MCF 10A (cell line): ENCODE measurements at regions of chr17 and their contacts with region 1.

Region 1: DNA sequence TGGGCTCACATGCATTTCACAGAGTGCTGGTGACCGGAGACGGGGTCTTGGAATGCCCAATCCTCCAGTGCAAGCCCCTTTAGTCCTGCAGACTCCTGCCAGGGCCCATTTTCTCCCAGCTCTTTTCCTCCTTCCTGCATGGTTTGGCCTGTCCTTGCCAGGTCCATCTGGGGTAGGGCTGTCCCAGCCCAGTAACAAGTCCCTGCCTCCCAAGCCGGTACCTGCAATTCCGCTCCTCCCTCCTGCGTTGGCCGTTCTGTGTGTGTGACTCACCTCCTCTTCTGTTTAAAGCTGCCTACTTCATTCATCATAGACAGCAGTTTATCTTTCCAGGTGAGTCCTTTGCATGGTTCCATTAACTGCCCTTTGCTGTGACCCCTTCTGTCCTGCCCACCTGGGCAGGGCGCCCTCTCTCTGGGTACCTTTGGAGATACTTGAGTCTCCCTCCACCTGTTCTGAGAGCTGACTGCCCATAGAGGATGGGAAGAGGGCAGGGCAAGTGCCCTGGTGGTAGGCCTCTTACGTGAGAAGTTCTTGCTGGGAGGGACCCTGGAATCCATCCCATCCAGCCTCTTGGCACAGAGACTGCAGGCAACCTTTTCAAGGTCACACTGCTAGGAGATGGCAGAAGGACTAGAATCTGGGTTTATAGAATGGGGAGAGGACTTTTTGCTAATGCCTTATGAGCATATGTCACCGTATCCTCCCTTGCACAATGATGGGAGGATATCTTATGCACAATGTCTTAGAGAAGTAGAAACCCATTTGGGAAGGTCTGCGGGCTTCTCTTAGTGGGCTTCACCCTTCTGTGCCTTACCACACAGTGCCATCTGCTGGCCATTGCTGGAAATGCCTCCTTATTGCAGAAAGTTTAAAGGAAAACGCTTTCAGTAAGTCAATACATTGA is 29.7 kb upstream of the LGALS9 start:
- DNase-seq: peak; percentile 79
- H3K4me3 Mint-ChIP-seq: no peak overlapping the region
- H3K27ac Mint-ChIP-seq: no peak overlapping the region
- H3K4me1 Mint-ChIP-seq: peaks cover 21% of the 10 kb centered on the region
- H3K27me3 Mint-ChIP-seq: no peaks in the 10 kb centered on the region
- CTCF ChIP-seq: peak; percentile 93

Region 2: DNA sequence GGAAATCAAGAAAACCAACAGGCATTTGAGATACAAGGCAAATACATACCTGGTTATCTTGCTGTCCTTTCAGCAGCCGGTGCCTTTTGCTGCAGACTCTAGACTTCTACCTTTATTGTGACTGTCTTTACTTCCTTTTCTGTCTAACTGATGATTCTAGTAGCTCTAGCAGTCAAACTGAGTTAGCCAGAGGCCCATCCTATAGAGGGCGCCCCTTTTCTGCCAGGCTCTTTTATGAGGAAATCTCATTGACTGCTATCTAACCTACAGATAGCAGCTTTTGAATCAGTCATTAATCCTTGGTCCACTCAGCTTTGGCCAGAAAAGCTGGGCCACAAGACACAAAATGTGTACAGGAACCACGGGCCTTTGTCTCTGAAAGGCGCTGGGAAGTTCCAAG is 394.9 kb before region 1 on chr17:
- CTCF ChIA-PET with region 1: interaction called, 16 read pairs
- POLR2A ChIA-PET with region 1: no interaction called
- intact Hi-C with region 1: no loop called
- DNase-seq: peak; percentile 21
- H3K4me3 Mint-ChIP-seq: no peak overlapping the region
- H3K27ac Mint-ChIP-seq: no peak overlapping the region
- H3K4me1 Mint-ChIP-seq: peaks cover 13% of the 10 kb centered on the region
- H3K27me3 Mint-ChIP-seq: no peaks in the 10 kb centered on the region
- CTCF ChIP-seq: no peak

Region 3: DNA sequence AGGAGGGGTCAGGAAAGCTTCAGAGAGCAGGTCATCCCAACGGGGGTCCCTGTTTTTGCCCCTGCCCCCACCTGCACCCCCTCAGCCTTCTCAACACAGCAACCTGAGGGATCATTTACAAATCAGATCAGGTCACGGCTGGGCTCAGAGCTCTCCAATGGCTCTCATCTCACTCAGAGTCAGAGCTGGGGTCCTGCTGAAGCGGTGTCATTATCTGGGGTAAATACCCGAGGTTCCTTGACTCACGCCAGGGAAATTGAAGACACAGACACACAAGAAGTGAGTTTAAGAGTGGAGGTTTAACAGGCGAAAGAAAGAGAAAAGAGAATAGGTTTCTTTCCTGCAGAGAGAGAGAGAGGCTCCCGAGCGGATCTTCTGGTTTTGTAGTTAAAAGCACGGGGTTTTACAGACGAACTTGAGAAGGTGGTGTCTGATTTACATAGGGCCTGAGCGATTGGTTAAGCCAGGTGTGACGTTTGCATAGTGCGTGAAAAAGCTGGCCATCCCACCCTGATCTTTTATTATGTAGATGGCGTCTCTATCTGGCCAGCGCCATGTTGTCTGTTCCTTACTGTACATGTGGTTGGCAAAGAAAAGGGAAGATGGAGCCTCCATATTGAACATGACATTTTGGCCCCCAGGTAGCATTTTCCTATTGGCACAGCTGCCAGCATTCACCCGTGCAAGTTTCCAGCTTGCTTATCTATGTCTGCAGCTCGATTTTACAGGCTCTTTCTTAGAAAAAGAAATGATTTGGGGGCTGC is 256.0 kb before region 1 on chr17:
- CTCF ChIA-PET with region 1: interaction called, 22 read pairs
- POLR2A ChIA-PET with region 1: no interaction called
- intact Hi-C with region 1: no loop called
- DNase-seq: no peak
- H3K4me3 Mint-ChIP-seq: no peak overlapping the region
- H3K27ac Mint-ChIP-seq: no peak overlapping the region
- H3K4me1 Mint-ChIP-seq: no peaks in the 10 kb centered on the region
- H3K27me3 Mint-ChIP-seq: no peaks in the 10 kb centered on the region
- CTCF ChIP-seq: no peak

Region 4: GRCh38 chr17:27407916-27408846 is 193.1 kb before region 1 on chr17:
- CTCF ChIA-PET with region 1: interaction called, 28 read pairs
- POLR2A ChIA-PET with region 1: no interaction called
- intact Hi-C with region 1: no loop called
- DNase-seq: peak; percentile 83
- H3K4me3 Mint-ChIP-seq: no peak overlapping the region
- H3K27ac Mint-ChIP-seq: no peak overlapping the region
- H3K4me1 Mint-ChIP-seq: peaks cover 20% of the 10 kb centered on the region
- H3K27me3 Mint-ChIP-seq: peaks cover 8% of the 10 kb centered on the region
- CTCF ChIP-seq: no peak

Region 5: DNA sequence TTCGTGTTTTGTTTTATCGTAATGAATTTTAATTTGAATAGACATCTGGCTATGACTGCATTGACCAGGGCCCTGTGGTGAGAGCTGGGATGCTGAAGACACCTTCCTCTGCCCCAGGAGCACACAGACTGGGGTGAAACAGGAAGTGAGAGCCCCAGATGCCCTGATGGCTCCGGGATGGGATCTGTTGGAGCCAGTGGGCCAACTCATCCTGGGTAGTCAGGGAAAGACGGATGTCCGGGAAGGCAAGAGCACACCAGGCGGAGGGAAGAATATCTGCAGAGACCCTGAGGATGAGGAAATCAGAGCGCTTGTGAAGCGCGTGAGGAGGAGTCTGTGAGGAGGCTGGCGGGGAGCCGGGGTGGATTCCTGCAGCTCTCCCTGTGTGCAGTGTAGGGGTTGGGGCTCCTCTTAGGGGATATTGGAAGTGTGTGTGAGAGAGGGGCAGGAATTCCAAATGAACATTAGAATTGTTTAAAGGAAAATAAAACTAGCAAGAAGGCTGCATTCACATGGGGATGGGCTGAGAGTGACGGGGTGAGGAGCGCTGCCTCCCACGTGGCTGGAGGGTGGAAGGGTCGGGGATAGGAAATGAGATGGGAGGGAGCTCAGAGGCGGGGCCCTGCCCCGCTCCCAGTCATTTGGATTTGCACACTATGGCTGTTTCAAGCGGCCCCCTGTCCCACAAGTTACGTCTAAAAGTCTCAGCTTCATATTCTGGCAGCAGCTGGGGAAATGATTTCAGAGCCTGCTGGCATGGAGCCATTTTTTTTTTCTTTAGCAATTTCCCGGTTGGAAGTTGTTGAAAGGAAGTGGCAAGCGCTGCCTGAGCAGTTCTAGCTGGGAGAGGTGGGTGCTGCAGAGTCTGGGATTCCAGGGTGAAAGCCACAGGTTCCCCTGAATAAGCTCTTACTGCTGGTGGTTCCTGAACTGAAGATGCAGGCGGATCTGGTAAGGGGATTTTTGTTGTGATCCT is 41.5 kb before region 1 on chr17:
- CTCF ChIA-PET with region 1: interaction called, 13 read pairs
- POLR2A ChIA-PET with region 1: no interaction called
- intact Hi-C with region 1: no loop called
- DNase-seq: peak; percentile 90
- H3K4me3 Mint-ChIP-seq: no peak overlapping the region
- H3K27ac Mint-ChIP-seq: no peak overlapping the region
- H3K4me1 Mint-ChIP-seq: peaks cover 24% of the 10 kb centered on the region
- H3K27me3 Mint-ChIP-seq: no peaks in the 10 kb centered on the region
- CTCF ChIP-seq: no peak

Region 6: GRCh38 chr17:27622986-27623385 is 21.7 kb after region 1 on chr17:
- CTCF ChIA-PET with region 1: interaction called, 97 read pairs
- POLR2A ChIA-PET with region 1: no interaction called
- intact Hi-C with region 1: no loop called
- DNase-seq: no peak
- H3K4me3 Mint-ChIP-seq: no peak overlapping the region
- H3K27ac Mint-ChIP-seq: no peak overlapping the region
- H3K4me1 Mint-ChIP-seq: no peaks in the 10 kb centered on the region
- H3K27me3 Mint-ChIP-seq: no peaks in the 10 kb centered on the region
- CTCF ChIP-seq: no peak